Activated CD4-positive, alpha-beta T cell treated with anti-CD3 and anti-CD28 coated beads for 36 hours (primary cell): ENCODE measurements at regions of chr9 and their contacts with region 1.

Region 1: GRCh38 chr9:91775011-91775707 is 174.9 kb downstream of the ROR2 start:
- DNase-seq: peak; percentile 84
- ATAC-seq: peak; percentile 69
- H3K4me3 Mint-ChIP-seq: no peak overlapping the region
- H3K27ac Mint-ChIP-seq: no peak overlapping the region
- H3K4me1 Mint-ChIP-seq: no peaks in the 10 kb centered on the region
- H3K27me3 Mint-ChIP-seq: peaks cover 14% of the 10 kb centered on the region

Region 2: DNA sequence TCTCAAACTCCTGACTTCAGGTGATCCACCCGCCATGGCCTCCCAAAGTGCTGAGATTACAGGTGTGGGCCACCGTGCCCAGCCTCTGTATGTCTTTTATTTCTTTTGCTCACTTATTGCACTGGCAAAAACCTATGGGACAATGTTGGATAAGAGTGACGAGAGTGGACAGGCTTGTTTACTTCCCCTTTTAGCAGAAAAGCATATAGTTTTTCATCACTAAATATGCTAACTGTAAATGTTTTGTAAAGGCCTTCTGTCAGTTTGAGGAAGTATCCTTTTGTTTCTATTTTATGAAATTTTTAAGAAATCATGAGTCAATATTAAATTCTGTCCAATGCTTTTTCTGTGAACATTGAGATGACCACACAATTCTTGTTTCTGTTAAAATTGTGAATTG is 516.7 kb before region 1 on chr9:
- CTCF ChIA-PET with region 1: no interaction called
- POLR2A ChIA-PET with region 1: no interaction called
- intact Hi-C with region 1: no loop called
- DNase-seq: no peak
- ATAC-seq: no peak
- H3K4me3 Mint-ChIP-seq: no peak overlapping the region
- H3K27ac Mint-ChIP-seq: no peak overlapping the region
- H3K4me1 Mint-ChIP-seq: peaks cover 46% of the 10 kb centered on the region
- H3K27me3 Mint-ChIP-seq: no peaks in the 10 kb centered on the region

Region 3: DNA sequence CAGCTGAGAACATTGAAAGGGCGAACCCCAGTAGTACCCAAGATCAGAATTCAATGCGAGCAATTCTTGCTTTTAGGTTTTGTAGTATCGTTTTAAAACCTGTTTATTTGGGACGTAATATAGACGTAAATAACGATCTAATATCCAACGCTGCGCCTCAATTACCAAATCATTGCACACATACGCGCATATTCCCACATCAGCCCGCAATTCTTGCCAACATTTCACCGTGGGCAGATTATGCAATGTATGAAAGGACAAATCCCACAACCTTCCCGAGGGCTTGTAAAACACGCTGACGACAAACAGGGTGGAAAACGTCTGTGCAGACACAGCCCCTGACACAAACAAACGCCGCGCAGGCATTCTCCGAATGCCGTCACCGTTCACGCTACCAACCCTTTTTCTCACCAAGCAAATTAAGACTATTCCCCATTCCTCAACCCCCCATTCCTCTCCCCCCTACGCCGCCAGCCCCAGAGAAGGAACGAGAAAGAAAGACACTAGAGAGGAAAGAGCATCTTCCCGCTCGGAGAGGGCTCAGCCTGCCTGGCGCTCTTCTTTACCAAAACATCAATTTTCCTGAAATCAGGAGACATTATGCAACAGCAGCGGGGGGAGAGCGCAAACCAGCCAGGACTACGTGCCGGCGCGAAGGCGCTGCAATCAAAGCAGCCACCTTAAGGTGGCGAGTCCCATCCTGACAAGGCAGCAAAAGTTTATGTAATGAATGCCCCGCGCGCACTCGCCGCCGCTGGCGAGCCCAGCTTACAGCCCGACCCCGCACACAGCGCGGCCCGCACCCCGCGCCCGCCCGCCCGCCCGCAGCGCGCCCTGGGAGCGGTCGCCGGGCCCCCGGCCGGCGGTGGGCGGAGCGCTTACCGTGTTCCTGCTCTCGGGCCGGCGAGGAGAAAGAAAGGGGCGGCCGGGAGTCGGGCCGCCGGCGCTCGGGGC is 352.1 kb before region 1 on chr9:
- CTCF ChIA-PET with region 1: no interaction called
- POLR2A ChIA-PET with region 1: no interaction called
- intact Hi-C with region 1: no loop called
- DNase-seq: peak; percentile 83
- ATAC-seq: peak; percentile 8
- H3K4me3 Mint-ChIP-seq: peak overlapping the region; percentile 98
- H3K27ac Mint-ChIP-seq: peak overlapping the region; percentile 95
- H3K4me1 Mint-ChIP-seq: peaks cover 55% of the 10 kb centered on the region
- H3K27me3 Mint-ChIP-seq: no peaks in the 10 kb centered on the region

Region 4: GRCh38 chr9:91758491-91758981 is 16.6 kb before region 1 on chr9:
- CTCF ChIA-PET with region 1: interaction called, 11 read pairs
- POLR2A ChIA-PET with region 1: no interaction called
- intact Hi-C with region 1: no loop called
- DNase-seq: peak; percentile 67
- ATAC-seq: peak; percentile 65
- H3K4me3 Mint-ChIP-seq: no peak overlapping the region
- H3K27ac Mint-ChIP-seq: no peak overlapping the region
- H3K4me1 Mint-ChIP-seq: no peaks in the 10 kb centered on the region
- H3K27me3 Mint-ChIP-seq: peaks cover 3% of the 10 kb centered on the region

Region 5: GRCh38 chr9:91884696-91885687 is 109.8 kb after region 1 on chr9:
- CTCF ChIA-PET with region 1: no interaction called
- POLR2A ChIA-PET with region 1: no interaction called
- intact Hi-C with region 1: loop called in 1 of 2 experiments (anchors 5 kb)
- DNase-seq: no peak
- ATAC-seq: no peak
- H3K4me3 Mint-ChIP-seq: no peak overlapping the region
- H3K27ac Mint-ChIP-seq: no peak overlapping the region
- H3K4me1 Mint-ChIP-seq: no peaks in the 10 kb centered on the region
- H3K27me3 Mint-ChIP-seq: peaks cover 7% of the 10 kb centered on the region

Region 6: GRCh38 chr9:91949946-91950664 is 174.9 kb after region 1 on chr9 and contains the start of gene ROR2:
- CTCF ChIA-PET with region 1: interaction called, 8 read pairs
- POLR2A ChIA-PET with region 1: no interaction called
- intact Hi-C with region 1: loop called (anchors 1 to 5 kb)
- DNase-seq: peak; percentile 75
- ATAC-seq: peak; percentile 86
- H3K4me3 Mint-ChIP-seq: no peak within 1 kb of the TSS
- H3K27ac Mint-ChIP-seq: no peak within 1 kb of the TSS
- H3K4me1 Mint-ChIP-seq: peaks cover 4% of the 10 kb centered on the region
- H3K27me3 Mint-ChIP-seq: peaks cover 61% of the 10 kb centered on the region
- total RNA-seq, gene ROR2: not detected